ENCODE measurements at regions of chr5 and their contacts with region 1.

Region 1: DNA sequence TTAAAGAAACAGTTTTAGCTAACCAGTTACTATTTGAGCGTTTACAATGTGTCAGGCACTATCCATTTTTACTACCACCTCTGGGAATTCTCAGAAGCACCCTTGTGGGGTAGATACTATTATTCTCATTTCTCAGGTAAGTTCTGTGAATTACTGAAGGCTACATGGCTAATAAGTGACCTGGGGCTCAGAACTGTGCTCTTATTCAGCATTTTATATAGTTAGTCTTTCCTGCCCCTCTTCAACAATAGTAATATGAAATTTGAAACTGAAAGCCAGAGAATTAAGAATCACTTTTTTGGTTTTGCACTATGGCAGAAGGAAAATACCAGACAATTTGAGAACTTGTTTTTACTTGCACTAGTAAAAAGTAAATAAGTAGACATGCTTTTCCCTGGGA is 11.8 kb downstream of the ELL2 start:
- DNase-seq: no peak
- ATAC-seq: no peak
- H3K4me3 ChIP-seq: no peak overlapping the region
- H3K27ac ChIP-seq: no peak overlapping the region
- H3K4me1 ChIP-seq: peaks cover 65% of the 10 kb centered on the region
- H3K27me3 ChIP-seq: no peaks in the 10 kb centered on the region
- CTCF ChIP-seq: no peak
- POLR2A ChIP-seq: no peak

Region 2: DNA sequence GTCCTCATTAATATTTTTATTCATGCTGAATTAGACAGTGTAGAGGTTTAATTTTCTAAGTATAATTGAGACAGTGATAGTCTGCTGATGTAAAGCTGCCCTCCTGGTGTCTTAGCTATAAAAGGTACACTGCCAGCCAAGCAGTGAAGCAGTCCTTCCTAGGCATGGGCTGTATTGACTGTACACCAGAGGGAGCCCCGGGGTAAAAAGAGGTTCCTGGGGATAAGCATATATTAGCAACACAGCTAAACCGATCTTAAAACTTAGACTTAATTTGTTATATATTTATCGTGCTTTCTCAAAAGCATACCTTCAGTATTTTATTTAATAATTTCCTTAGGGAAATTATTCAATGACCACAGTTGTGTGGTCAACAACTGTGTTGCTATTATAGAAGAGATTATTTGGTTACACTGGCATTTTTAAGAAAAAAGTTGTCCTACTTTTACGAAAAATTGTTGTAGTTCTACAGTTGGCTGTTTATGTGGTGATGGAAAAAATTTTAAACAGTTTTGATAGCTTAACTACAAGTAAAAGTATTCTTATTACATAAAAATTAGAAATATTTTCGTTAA is 56.9 kb before region 1 on chr5:
- intact Hi-C with region 1: loop called (anchors 10 kb)
- DNase-seq: peak; percentile 35 to 58 (median 49)
- ATAC-seq: no peak
- H3K4me3 ChIP-seq: no peak overlapping the region
- H3K27ac ChIP-seq: no peak overlapping the region
- H3K4me1 ChIP-seq: peaks cover 7% of the 10 kb centered on the region
- H3K27me3 ChIP-seq: no peaks in the 10 kb centered on the region
- CTCF ChIP-seq: peak in 6 of 7 experiments; percentile 22 to 51 (median 40)
- POLR2A ChIP-seq: no peak

Measured in body of pancreas (tissue), 4 donors.